Transverse colon (tissue), 4 donors: ENCODE measurements at regions of chr20 and their contacts with region 1.

Region 1: GRCh38 chr20:44954166-44954565 is 6.0 kb downstream of the TOMM34 start:
- DNase-seq: no peak
- H3K4me3 ChIP-seq: no peak overlapping the region
- H3K27ac ChIP-seq: no peak overlapping the region
- H3K4me1 ChIP-seq: peaks cover 2 to 12% (median 7%) of the 10 kb centered on the region in 4 donors
- H3K27me3 ChIP-seq: no peaks in the 10 kb centered on the region
- CTCF ChIP-seq: no peak
- EP300 ChIP-seq: no peak
- POLR2A ChIP-seq: no peak

Region 2: DNA sequence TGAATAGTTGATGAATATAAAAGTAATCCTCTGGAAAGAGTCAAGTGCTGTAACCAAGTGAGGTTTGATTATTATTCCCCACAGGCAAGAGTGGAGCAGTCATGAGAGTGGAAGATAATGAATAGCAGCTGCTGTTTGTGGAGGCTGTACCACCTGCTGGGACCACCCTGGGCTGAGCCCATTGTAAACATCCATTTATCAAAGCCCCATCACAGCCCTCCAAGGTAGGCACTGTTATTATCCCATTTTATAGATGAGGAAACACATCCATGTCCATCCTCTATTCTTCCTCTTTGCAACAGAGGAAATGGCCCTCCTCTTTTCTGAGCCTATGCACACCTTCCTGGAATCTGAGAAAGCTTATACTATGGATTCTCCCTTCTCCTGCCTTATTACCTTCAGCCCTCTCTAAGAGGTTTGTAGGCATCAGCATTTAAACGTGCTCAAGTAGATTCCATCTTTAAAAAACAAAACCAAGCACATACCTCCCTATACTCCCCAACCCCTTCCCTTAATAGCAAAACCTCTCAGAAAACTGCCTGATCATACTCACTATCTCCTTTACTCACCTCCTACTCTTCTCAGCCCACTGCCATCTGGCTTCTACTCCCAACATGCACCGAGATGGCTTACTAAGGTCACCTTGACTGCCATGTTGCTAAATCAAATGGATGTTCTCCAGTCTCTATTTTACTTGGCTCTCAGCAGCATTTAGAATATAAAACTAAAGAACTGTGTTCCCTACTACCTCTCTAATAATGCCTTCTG is 1317.0 kb after region 1 on chr20:
- in situ Hi-C with region 1: no loop called
- intact Hi-C with region 1: loop called (anchors 5 kb)
- DNase-seq: no peak
- H3K4me3 ChIP-seq: no peak overlapping the region
- H3K27ac ChIP-seq: no peak overlapping the region
- H3K4me1 ChIP-seq: no peaks in the 10 kb centered on the region
- H3K27me3 ChIP-seq: peaks cover 87% of the 10 kb centered on the region
- CTCF ChIP-seq: no peak
- EP300 ChIP-seq: no peak
- POLR2A ChIP-seq: no peak